Psoas muscle (tissue), 8 donors: ENCODE measurements at regions of chr6 and their contacts with region 1.

Region 1: GRCh38 chr6:3209114-3210023 is 18.1 kb downstream of the TUBB2B start:
- DNase-seq: peak; percentile 65 to 67
- ATAC-seq: peak; percentile 71 to 84 (median 76)
- H3K4me3 ChIP-seq: no peak overlapping the region
- H3K27ac ChIP-seq: no peak overlapping the region
- H3K4me1 ChIP-seq: no peaks in the 10 kb centered on the region
- H3K27me3 ChIP-seq: peaks cover 0 to 31% (median 5%) of the 10 kb centered on the region in 3 donors
- CTCF ChIP-seq: no peak

Region 2: GRCh38 chr6:3180350-3180749 is 29.0 kb before region 1 on chr6:
- intact Hi-C with region 1: loop called in 1 of 2 experiments (anchors 1 kb)
- DNase-seq: no peak
- ATAC-seq: no peak
- H3K4me3 ChIP-seq: no peak overlapping the region
- H3K27ac ChIP-seq: no peak overlapping the region
- H3K4me1 ChIP-seq: no peaks in the 10 kb centered on the region
- H3K27me3 ChIP-seq: no peaks in the 10 kb centered on the region
- CTCF ChIP-seq: no peak